ENCODE measurements at regions of chr3 and their contacts with region 1.

Region 1: GRCh38 chr3:39063143-39063542 is 11.3 kb downstream of the WDR48 start:
- DNase-seq: no peak
- H3K4me3 Mint-ChIP-seq: no peak overlapping the region
- H3K27ac Mint-ChIP-seq: no peak overlapping the region
- H3K4me1 Mint-ChIP-seq: peaks cover 32% of the 10 kb centered on the region
- H3K27me3 Mint-ChIP-seq: no peaks in the 10 kb centered on the region

Region 2: GRCh38 chr3:37912052-37912733 is 1151.0 kb before region 1 on chr3:
- CTCF ChIA-PET with region 1: no interaction called
- intact Hi-C with region 1: no loop called
- DNase-seq: no peak
- H3K4me3 Mint-ChIP-seq: no peak overlapping the region
- H3K27ac Mint-ChIP-seq: no peak overlapping the region
- H3K4me1 Mint-ChIP-seq: peaks cover 7% of the 10 kb centered on the region
- H3K27me3 Mint-ChIP-seq: no peaks in the 10 kb centered on the region

Region 3: DNA sequence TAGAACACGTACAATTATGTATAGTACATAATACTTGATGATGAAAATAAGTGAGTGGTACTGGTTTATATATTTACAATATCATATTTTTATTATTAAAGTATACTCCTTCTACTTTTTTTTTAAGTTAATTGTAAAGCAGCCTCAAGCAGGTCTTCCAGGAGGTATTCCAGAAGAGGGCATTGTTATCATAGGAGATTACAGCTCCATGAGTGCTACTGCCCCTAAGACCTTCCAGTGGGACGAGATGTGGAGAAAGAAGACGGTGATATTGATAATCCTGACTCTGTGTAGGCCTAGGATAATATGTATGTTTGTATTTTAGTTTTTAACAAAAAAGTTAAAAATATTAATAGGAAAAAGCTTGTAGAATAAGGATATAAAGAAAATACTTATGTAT is 373.4 kb before region 1 on chr3:
- CTCF ChIA-PET with region 1: no interaction called
- intact Hi-C with region 1: no loop called
- DNase-seq: no peak
- H3K4me3 Mint-ChIP-seq: no peak overlapping the region
- H3K27ac Mint-ChIP-seq: no peak overlapping the region
- H3K4me1 Mint-ChIP-seq: no peaks in the 10 kb centered on the region
- H3K27me3 Mint-ChIP-seq: peaks cover 3% of the 10 kb centered on the region

Region 4: DNA sequence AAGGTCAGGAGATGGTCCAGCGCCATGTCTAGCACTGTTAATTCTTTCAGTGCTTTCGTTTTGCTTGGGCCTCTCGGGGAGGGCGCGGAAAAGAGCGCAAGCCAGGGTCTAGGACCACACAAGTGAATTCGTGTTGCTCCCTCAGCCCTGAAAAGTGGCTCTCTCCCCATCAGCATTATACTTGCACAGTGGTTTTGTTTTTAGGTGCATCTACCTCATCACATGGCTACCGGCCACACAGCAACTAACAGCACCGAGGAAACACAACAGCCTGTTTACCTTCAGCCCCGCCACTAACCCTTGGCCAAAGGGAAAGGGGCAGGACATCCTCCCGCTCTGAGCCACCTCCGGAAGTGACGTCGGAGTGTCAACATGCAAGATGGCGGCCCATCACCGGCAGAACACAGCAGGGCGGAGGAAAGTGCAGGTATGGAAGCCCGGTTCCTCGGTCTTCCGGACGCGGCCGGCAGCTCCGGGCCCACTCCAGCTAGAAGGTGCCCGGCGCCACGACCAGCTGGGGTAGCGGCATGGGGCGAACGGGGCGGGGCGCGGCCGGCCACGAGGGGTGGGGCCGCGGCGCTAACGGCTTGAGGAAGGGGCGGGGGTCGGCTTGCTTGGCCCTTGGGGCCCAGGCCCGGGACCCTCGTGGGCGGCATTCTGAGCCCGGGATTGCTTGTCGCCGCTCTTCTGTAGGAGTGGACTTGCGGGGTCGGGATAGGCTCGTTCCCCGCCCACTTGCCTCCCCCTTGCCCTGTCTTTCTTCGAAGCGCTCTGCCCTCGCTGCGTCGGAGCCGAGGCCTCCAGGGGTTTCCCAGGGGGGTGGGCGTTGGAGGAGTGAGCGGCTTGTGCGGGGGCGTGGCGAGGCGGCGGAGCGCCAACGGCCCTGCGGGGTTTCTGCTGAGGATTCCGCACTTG is 11.2 kb before region 1 on chr3 and contains the starts of genes SCN11A and WDR48:
- CTCF ChIA-PET with region 1: no interaction called
- intact Hi-C with region 1: loop called (anchors 1 kb)
- DNase-seq: peak; percentile 97
- H3K4me3 Mint-ChIP-seq: peak within 1 kb of the TSS; percentile 96
- H3K27ac Mint-ChIP-seq: peak within 1 kb of the TSS; percentile 98
- H3K4me1 Mint-ChIP-seq: peaks cover 50% of the 10 kb centered on the region
- H3K27me3 Mint-ChIP-seq: no peaks in the 10 kb centered on the region
- total RNA-seq, gene SCN11A: 0.05 TPM
- total RNA-seq, gene WDR48: 32.3 to 32.9 TPM